CD8-positive, alpha-beta T cell (primary cell): ENCODE measurements at regions of chr15 and their contacts with region 1.

Region 1: GRCh38 chr15:95503640-95504227 is 826.8 kb upstream of the NR2F2 start:
- DNase-seq: no peak
- ATAC-seq: no peak
- H3K4me3 ChIP-seq: no peak overlapping the region
- H3K4me3 Mint-ChIP-seq: no peak overlapping the region
- H3K27ac ChIP-seq: no peak overlapping the region
- H3K27ac Mint-ChIP-seq: no peak overlapping the region
- H3K4me1 ChIP-seq: no peaks in the 10 kb centered on the region
- H3K4me1 Mint-ChIP-seq: peaks cover 2% of the 10 kb centered on the region
- H3K27me3 ChIP-seq: no peaks in the 10 kb centered on the region
- H3K27me3 Mint-ChIP-seq: peaks cover 3% of the 10 kb centered on the region
- CTCF ChIP-seq: no peak

Region 2: DNA sequence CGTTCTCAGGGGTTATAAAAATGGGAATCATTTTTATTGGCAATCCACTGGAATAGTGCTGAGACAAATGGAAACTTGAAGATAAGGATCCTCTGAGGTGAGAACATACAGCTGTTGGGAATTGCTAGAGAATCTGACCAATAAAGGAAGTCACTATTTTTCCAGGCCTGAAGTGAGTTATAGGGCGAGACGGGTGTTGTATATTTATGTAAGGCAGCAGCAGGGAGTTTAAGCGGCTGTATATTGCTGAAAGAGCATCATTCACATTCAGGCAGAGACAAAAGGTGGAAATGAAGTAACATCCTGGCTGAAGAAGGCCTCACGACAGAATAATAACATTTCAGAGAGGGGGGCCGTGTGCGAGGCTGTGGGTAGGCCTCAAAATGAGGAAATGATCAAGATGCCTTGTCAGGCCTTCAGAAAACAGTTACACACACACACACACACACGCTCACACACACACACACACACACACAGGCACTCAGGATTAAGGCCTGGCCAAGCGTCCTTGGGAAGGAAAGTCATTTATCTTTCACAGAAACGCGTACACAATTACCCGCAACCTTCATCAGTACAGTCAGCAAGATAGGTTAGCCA is 138.1 kb before region 1 on chr15:
- CTCF ChIA-PET with region 1: no interaction called
- POLR2A ChIA-PET with region 1: no interaction called
- intact Hi-C with region 1: loop called in 1 of 2 experiments (anchors 10 kb)
- DNase-seq: no peak
- ATAC-seq: no peak
- H3K4me3 ChIP-seq: no peak overlapping the region
- H3K4me3 Mint-ChIP-seq: no peak overlapping the region
- H3K27ac ChIP-seq: no peak overlapping the region
- H3K27ac Mint-ChIP-seq: no peak overlapping the region
- H3K4me1 ChIP-seq: no peaks in the 10 kb centered on the region
- H3K4me1 Mint-ChIP-seq: no peaks in the 10 kb centered on the region
- H3K27me3 ChIP-seq: no peaks in the 10 kb centered on the region
- H3K27me3 Mint-ChIP-seq: peaks cover 12% of the 10 kb centered on the region
- CTCF ChIP-seq: no peak

Region 3: GRCh38 chr15:95470997-95471689 is 32.6 kb before region 1 on chr15:
- CTCF ChIA-PET with region 1: no interaction called
- POLR2A ChIA-PET with region 1: no interaction called
- intact Hi-C with region 1: no loop called
- DNase-seq: no peak
- ATAC-seq: no peak
- H3K4me3 ChIP-seq: no peak overlapping the region
- H3K4me3 Mint-ChIP-seq: no peak overlapping the region
- H3K27ac ChIP-seq: no peak overlapping the region
- H3K27ac Mint-ChIP-seq: no peak overlapping the region
- H3K4me1 ChIP-seq: no peaks in the 10 kb centered on the region
- H3K4me1 Mint-ChIP-seq: no peaks in the 10 kb centered on the region
- H3K27me3 ChIP-seq: no peaks in the 10 kb centered on the region
- H3K27me3 Mint-ChIP-seq: peaks cover 12% of the 10 kb centered on the region
- CTCF ChIP-seq: no peak

Region 4: DNA sequence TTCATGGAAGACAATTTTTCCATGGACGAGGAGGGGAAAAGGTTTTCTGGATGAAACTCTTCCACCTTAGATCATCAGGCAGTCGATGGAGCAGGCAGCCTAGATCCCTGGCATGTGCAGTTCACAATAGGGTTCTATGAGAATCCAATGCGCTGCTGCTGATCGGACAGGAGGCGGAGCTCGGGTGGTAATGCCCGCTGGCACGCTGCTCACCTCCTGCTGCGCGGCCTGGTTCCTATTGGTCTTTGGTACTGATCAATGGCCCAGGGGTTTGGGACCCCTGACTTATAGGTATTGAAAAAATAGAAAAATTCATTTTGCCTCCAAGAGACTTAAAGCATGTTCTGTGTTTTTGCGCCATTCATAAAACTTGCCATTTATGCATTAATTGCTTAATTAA is 32.9 kb after region 1 on chr15:
- CTCF ChIA-PET with region 1: no interaction called
- POLR2A ChIA-PET with region 1: no interaction called
- intact Hi-C with region 1: no loop called
- DNase-seq: no peak
- ATAC-seq: no peak
- H3K4me3 ChIP-seq: no peak overlapping the region
- H3K4me3 Mint-ChIP-seq: no peak overlapping the region
- H3K27ac ChIP-seq: no peak overlapping the region
- H3K27ac Mint-ChIP-seq: no peak overlapping the region
- H3K4me1 ChIP-seq: no peaks in the 10 kb centered on the region
- H3K4me1 Mint-ChIP-seq: no peaks in the 10 kb centered on the region
- H3K27me3 ChIP-seq: no peaks in the 10 kb centered on the region
- H3K27me3 Mint-ChIP-seq: peaks cover 5% of the 10 kb centered on the region
- CTCF ChIP-seq: no peak